GM12878 (cell line): ENCODE measurements at regions of chr2 and their contacts with region 1.

Region 1: GRCh38 chr2:120552800-120553481 is 182.7 kb upstream of the GLI2 start:
- DNase-seq: no peak
- ATAC-seq: peak; percentile 85
- H3K4me3 ChIP-seq: no peak overlapping the region
- H3K27ac ChIP-seq: no peak overlapping the region
- H3K4me1 ChIP-seq: no peaks in the 10 kb centered on the region
- H3K27me3 ChIP-seq: no peaks in the 10 kb centered on the region; a peak in 2 of 4 replicates
- CTCF ChIP-seq: peak; percentile 23 to 55 (median 52); a peak in 5 of 6 replicates
- EP300 ChIP-seq: no peak
- POLR2A ChIP-seq: no peak
- RAD21 ChIP-seq: no peak

Region 2: DNA sequence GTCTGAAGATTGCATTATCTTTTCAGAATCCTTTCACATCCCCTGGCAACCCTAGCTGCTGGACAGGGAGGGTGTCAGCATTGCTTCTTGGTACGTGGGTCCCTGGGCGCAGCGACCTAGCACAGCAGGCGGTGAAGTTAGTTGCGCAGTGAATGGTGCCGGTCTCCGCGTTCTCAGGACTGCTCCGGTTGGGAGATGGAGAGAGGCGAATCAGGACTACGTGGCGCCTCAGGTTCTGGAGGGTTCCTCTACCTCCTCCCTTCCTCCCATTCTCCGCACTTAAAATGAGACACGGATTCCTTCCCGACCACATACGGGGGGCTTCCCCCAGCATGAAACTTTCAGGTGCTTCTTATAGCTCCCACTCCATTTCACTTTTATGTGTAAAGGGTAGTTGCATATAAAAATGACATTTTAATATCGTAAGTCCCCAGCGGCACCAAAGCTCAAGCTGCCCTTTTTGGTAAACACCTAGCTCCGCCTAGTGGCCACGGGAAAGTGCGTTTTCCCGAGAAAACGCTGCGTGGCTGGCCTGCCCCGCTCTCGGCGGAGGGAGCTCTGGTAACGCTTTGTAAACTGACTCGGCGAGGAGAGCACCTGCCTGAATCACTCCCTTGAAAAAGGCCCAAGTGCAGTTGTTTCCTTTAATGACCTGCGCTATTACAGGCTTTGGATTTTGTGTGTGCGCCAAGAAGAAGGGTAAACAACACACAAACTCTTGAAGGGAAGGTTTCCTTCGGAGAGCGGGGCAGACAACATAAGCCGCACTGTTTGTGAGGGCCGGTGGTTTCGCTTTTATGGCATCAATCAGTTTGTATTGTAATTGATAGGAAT is 239.9 kb before region 1 on chr2:
- CTCF ChIA-PET with region 1: no interaction called
- POLR2A ChIA-PET with region 1: no interaction called
- RAD21 ChIA-PET with region 1: no interaction called
- SMC1A ChIA-PET with region 1: no interaction called
- in situ Hi-C with region 1: no loop called
- intact Hi-C with region 1: no loop called
- DNase-seq: peak; percentile 23
- ATAC-seq: peak; percentile 72
- H3K4me3 ChIP-seq: peak overlapping the region; percentile 47; the same call in 1 of the 2 replicates
- H3K27ac ChIP-seq: no peak overlapping the region
- H3K4me1 ChIP-seq: peaks cover 24% of the 10 kb centered on the region
- H3K27me3 ChIP-seq: 0 out of 4 replicates have a peak, but pooled peaks cover 0 to 1% of the 10 kb centered on the region in 2 experiments
- CTCF ChIP-seq: peak; percentile 93 to 97 (median 96)
- EP300 ChIP-seq: no peak
- POLR2A ChIP-seq: no peak
- RAD21 ChIP-seq: peak; percentile 95

Region 3: DNA sequence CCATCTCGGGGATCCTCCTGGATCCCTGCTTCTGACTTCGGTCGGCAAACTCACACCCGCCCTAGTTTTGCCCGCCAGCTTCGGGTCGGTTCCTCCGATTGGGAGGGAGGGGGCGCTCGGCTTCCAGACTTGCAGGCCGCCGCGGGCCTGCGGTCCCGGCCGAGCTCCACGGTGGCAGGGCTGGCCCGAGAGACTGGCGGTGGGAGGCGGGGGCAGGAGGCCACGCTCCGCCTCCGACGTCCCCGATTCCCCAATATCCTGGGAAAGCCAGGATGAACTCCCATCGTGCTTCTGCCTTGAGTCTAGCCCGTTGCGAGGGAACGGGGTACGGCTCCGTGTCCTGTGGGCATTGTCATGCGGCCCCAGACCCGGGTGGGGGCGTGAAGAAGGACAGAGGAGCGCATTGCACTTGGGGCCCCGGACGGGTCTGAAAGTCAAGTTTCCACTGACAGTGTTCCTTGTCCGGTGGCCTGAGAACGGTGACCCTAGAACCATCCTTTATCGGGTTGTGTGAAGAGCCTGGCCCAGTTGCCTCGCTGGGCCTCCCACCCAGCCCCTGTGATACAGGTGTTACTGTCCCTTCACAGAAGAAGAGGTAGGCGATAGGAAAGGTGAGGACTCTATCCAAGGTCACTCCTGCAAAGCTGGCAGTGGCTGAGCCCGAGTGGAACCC is 209.4 kb before region 1 on chr2:
- CTCF ChIA-PET with region 1: no interaction called
- POLR2A ChIA-PET with region 1: no interaction called
- RAD21 ChIA-PET with region 1: no interaction called
- SMC1A ChIA-PET with region 1: no interaction called
- in situ Hi-C with region 1: no loop called
- intact Hi-C with region 1: loop called (anchors 10 kb)
- DNase-seq: no peak
- ATAC-seq: peak; percentile 74
- H3K4me3 ChIP-seq: no peak overlapping the region
- H3K27ac ChIP-seq: no peak overlapping the region
- H3K4me1 ChIP-seq: no peaks in the 10 kb centered on the region
- H3K27me3 ChIP-seq: peaks cover 14 to 24% of the 10 kb centered on the region in 2 experiments
- CTCF ChIP-seq: peak; percentile 46 to 53 (median 49)
- EP300 ChIP-seq: no peak
- POLR2A ChIP-seq: no peak
- RAD21 ChIP-seq: peak; percentile 67